HEK293T (cell line): ENCODE measurements at regions of chr7 and their contacts with region 1.

Region 1: DNA sequence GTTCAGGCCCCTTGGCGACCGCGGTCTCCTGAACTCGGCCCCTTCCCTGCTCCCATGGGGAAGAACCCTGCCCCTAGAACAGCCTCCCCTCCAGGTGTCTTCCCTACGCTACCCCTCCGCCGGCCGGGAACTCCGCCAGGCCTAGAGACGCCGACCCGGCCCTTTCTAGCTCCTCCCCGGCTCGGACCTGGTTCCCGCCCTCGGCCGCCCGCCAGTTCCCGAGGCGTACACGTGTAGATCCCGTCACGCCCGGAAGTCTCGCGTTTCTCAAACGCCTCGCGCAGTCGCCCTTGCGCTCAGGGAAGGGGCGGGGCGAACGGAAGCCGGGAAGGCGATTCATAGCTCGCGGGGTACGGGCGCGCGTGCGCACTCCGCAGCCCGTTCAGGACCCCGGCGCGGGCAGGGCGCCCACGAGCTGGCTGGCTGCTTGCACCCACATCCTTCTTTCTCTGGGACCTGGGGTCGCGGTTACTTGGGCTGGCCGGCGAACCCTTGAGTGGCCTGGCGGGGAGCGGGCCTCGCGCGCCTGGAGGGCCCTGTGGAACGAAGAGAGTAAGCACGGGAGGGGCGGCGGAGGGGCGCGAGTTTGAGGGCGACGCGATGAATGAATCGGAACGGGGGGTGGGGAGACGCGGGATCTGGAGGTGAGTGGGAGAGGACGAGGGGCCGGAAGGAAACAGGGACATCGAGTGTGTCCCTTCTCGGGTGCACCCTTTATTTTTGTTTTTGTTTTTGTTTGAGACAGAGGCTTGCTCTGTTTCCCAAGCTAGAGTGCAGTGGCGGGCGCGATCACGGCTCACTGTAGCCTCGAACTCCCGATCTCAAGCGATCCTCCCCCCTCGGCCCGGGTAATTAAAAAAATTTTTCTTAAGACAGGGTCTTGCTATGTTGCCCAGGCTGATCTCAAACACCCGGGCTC is at the start of gene POP7:
- DNase-seq: peak; percentile 98

Region 2: GRCh38 chr7:100109521-100110162 is 596.4 kb before region 1 on chr7:
- CTCF ChIA-PET with region 1: no interaction called
- POLR2A ChIA-PET with region 1: no interaction called
- DNase-seq: no peak

Region 3: GRCh38 chr7:100604028-100604975 is 101.7 kb before region 1 on chr7:
- CTCF ChIA-PET with region 1: interaction called, 4 read pairs
- POLR2A ChIA-PET with region 1: interaction called, 14 read pairs
- DNase-seq: peak; percentile 81

Region 4: GRCh38 chr7:100691676-100692577 is 14.1 kb before region 1 on chr7:
- CTCF ChIA-PET with region 1: interaction called, 17 read pairs
- POLR2A ChIA-PET with region 1: interaction called, 61 read pairs
- DNase-seq: peak; percentile 83

Region 5: DNA sequence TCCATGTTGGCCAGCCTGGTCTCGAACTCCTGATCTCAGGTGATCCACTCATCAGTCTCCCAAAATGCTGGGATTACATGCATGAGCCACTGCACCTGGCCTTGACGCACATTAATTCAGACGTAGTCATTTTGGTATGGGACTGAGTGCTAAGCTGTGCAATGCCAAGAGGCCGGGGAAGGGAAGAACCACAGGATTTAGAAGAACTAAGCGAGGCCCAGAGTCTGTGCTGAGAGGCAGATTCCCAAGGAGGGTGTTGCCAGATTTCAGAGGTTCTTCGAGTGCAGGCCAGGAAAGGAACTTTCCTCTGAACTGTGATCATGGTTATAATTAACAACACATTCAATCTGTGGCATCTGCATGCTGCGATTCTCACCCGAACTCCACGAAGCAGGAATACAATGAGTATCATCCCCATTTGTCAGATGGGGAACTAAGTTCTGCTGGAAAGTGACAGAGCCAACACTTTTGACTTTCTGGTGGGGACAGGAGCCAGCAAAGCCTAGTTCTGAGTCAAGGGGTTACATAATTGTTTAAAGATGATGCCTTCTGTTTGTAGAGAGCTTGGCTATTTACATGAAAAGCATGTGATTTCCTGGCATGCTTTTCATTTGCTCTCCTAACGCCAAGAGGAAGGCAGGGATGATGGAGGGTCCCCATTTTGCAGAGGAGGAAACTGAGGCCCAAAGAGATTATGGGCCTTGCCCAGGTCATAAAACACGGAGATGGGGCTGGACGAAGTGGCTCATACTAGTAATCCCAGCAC is 21.2 kb after region 1 on chr7:
- CTCF ChIA-PET with region 1: interaction called, 20 read pairs
- POLR2A ChIA-PET with region 1: interaction called, 68 read pairs
- DNase-seq: no peak

Region 6: DNA sequence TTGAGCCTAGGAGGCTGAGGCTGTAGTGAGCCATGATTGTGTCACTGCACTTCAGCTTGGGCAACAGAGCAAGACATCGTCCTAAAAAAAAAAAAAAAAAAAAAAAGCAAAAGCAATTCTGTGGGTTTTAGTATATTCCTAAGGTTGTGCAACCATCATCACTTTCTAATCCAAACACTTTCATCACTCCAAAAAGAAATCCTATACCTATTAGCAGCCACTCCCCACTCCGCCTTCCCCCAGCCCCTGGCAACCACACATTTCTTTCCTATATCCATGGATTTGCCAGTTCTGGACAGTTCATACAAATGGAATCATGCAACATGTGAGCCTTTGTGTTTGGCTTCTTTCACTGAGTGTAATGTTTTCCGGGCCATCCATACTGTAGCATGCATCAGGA is 47.7 kb after region 1 on chr7:
- CTCF ChIA-PET with region 1: no interaction called
- POLR2A ChIA-PET with region 1: no interaction called
- DNase-seq: no peak

Region 7: GRCh38 chr7:100819551-100819950 is 113.5 kb after region 1 on chr7:
- CTCF ChIA-PET with region 1: no interaction called
- POLR2A ChIA-PET with region 1: no interaction called
- DNase-seq: no peak

Region 8: DNA sequence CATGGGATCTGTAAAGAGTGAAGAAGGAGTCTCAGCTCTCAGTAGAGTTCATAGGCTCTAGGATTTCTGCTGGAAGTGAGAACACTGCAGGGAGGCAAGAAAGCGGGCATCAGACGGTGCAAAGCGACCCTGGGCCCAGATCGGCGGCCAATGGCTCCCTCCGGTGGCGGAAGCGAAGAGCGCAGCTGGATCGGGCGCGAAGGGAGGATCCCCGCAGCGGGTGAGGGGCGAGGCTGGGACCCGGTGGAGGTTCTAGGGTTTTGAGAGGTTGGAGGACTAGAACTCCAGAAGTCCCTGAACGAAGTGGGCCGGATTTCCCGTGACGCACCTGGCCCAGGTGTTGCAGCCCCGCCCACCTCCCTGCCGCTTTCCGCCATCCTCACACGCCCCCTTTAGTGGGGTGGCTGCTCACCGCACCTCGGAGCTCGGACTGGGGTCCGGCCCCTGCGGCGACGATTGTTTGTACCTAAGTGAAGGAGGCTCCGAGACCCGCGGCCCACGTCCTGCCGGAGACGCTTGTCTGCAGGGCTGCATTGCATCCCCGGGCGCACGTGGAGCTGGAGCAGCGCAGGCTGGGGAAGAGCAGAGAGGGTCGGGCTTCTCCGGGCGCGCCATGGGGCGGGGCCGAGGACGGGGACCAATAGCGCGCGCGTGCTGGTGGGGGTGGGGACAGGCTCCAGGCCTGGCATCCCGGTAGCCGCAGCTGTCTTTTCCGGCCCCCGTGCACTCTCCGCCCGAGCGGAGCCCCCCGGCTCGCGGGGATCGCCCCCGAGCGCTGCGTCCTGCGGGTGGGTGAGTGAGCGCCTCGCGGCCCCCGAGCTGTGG is 146.2 kb after region 1 on chr7 and contains the start of gene SLC12A9:
- CTCF ChIA-PET with region 1: interaction called, 23 read pairs
- POLR2A ChIA-PET with region 1: interaction called, 16 read pairs
- DNase-seq: peak; percentile 93

Region 9: DNA sequence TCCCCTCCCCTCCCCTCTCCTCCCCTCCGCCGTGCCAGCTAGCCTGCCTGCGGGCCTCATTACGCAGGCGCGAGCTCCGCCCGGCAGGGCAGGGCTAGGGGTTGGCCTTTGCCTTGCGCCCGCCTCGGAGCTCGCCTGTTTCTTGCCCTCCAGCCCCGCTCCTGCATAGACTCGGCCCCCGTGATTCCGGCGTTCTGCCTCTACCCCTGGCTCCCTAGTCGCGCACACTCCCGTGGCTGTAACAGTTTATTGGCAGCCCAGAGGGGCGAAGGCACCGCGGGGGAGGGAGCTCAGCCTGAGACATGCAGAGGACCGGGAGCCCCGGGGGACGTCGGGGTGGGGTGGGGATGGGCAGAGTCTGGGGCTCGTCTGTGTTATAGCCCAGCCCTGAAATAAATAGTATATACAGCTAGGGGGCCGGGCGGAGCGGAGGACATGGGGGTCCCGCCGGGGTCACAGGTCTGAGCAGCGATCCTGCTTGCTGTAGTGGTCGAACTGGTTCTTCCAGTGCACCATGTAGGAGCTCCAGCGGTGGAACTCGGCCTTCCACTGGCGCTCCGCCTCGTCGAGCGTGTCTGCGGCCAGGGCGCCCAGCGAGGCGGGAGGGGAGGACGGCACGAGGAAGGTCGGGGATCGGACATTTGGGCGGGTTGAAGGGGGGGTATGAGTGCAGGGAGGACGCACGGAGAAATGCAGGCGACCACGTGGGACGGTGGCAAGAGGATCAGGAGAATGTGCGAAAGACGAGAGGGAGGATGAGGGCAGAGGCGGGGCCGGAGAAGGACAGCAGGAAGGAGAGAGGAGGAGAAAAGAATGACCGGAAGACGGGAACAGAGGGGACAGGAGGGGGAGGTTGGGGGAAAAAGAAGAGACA is 184.0 kb after region 1 on chr7:
- CTCF ChIA-PET with region 1: interaction called, 3 read pairs
- POLR2A ChIA-PET with region 1: interaction called, 12 read pairs
- DNase-seq: peak; percentile 98